CD4-positive, alpha-beta memory T cell (primary cell): ENCODE measurements at regions of chr17 and their contacts with region 1.

Region 1: DNA sequence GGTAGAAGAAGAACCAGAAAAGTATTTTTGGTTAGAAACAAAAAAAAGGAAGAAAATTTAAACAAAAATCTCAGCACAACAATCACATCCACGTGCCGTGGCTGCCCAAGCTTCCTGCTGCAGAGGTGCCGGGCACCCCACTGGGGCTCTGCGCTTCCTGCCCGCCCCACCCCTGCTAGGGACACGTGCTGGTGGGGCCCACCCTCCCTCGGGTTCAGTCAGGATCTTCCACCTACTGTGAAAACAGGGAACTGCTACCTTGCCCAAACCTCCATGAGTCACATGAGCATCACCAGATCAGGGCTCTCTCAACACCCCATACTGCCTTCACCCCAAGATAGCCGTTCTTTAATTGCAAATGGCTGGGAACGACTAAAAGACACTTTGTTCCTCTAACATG is 24.4 kb upstream of the CYTH1 start:
- DNase-seq: peak in 4 of 5 donors; percentile 21 to 79 (median 64)
- H3K4me3 ChIP-seq: no peak overlapping the region
- H3K4me3 Mint-ChIP-seq: peak overlapping the region; percentile 3 to 83 (median 74)
- H3K27ac ChIP-seq: peak overlapping the region; percentile 57
- H3K27ac Mint-ChIP-seq: peak overlapping the region; percentile 87 to 99 (median 97)
- H3K4me1 ChIP-seq: peaks cover 49% of the 10 kb centered on the region
- H3K4me1 Mint-ChIP-seq: peaks cover 39 to 60% (median 52%) of the 10 kb centered on the region in 4 donors
- H3K27me3 ChIP-seq: no peaks in the 10 kb centered on the region
- H3K27me3 Mint-ChIP-seq: no peaks in the 10 kb centered on the region

Region 2: GRCh38 chr17:78774956-78775571 is 31.4 kb before region 1 on chr17:
- CTCF ChIA-PET with region 1: interaction called, 4 read pairs
- POLR2A ChIA-PET with region 1: interaction called, 28 read pairs
- intact Hi-C with region 1: no loop called
- DNase-seq: peak; percentile 57 to 85 (median 63)
- H3K4me3 ChIP-seq: peak overlapping the region; percentile 64 to 70
- H3K4me3 Mint-ChIP-seq: peak overlapping the region; percentile 88 to 97 (median 94)
- H3K27ac ChIP-seq: peak overlapping the region; percentile 81
- H3K27ac Mint-ChIP-seq: peak overlapping the region; percentile 92 to 99 (median 97)
- H3K4me1 ChIP-seq: peaks cover 94% of the 10 kb centered on the region
- H3K4me1 Mint-ChIP-seq: peaks cover 45 to 82% (median 57%) of the 10 kb centered on the region in 4 donors
- H3K27me3 ChIP-seq: no peaks in the 10 kb centered on the region
- H3K27me3 Mint-ChIP-seq: no peaks in the 10 kb centered on the region

Region 3: DNA sequence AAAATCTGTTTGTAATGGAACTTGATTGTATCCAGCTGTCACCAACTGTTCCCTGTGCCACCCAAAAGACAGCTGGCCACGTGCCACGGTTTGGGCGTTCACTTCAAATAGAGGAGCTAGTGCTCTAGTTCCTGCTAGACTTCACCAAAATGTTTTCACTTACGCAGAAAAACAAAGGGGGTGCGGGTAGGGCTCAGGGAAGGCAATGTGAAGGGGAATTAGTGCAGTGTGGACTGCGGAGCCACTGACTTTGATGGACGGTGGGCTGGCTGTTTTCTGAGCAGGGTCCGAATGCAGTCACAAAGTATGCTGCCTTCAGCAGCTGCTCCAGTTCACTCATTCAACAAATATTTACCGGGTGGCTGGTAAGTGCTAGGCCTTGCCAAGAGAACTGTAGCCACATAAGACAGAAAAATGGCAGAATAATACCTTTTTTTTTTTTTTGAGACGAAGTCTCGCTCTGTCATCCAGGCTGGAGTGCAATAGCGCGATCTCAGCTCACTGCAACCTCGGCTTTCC is 16.7 kb before region 1 on chr17:
- CTCF ChIA-PET with region 1: interaction called, 37 read pairs
- POLR2A ChIA-PET with region 1: interaction called, 53 read pairs
- intact Hi-C with region 1: no loop called
- DNase-seq: peak; percentile 76 to 85 (median 78)
- H3K4me3 ChIP-seq: no peak overlapping the region
- H3K4me3 Mint-ChIP-seq: peak overlapping the region in 7 of 8 donors; percentile 37 to 84 (median 70)
- H3K27ac ChIP-seq: peak overlapping the region; percentile 48
- H3K27ac Mint-ChIP-seq: peak overlapping the region; percentile 81 to 97 (median 95)
- H3K4me1 ChIP-seq: peaks cover 74% of the 10 kb centered on the region
- H3K4me1 Mint-ChIP-seq: peaks cover 39 to 89% (median 63%) of the 10 kb centered on the region in 4 donors
- H3K27me3 ChIP-seq: no peaks in the 10 kb centered on the region
- H3K27me3 Mint-ChIP-seq: no peaks in the 10 kb centered on the region

Region 4: DNA sequence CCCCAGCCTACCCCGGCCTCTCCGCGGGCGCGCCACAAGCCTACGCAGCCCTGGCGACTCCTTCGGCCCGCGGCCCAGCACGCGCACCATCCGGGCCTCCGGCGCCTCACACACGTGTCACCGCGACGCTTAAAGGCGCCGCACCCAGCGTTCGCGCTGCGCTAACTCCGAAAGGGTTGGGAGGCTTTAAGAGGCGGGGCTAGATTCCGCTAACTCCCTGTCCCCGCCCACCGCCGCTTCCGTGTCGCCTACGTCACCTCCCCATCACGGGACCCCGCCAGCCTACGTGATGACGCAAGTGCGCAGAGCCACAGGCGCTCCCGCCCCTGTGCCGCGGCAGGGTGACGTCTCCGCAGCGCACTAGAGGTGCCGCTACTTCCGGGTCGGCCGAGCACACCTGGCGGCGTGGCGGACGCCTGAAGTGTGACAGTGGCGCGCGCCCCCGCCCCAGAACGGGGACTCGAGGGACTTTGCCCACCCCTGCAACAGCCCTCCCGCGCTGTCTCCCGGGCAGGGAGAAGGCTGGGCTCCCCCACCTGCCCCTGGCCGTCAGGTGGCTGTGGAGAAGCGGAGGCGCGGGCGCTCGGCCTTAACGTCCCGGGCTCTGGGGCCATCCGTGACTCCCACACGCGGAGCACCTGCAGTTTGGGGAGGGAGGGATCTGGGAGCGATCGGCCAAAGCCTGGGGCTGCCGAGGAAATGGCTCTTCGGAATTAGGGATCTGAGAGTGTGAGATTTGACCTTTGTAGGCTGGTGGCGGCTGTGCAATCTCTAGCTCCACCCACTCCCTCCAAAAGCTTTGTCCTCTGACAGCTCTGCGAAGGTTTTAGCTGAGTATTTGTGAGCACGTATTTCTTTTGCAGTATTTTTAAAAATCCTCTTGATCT is 34.5 kb after region 1 on chr17 and contains the start of gene USP36:
- CTCF ChIA-PET with region 1: interaction called, 8 read pairs
- POLR2A ChIA-PET with region 1: interaction called, 8 read pairs
- intact Hi-C with region 1: loop called (anchors 5 kb)
- DNase-seq: peak; percentile 99 to 100 (median 99)
- H3K4me3 ChIP-seq: peak within 1 kb of the TSS; percentile 74 to 89
- H3K4me3 Mint-ChIP-seq: peak within 1 kb of the TSS; percentile 93 to 99 (median 96)
- H3K27ac ChIP-seq: peak within 1 kb of the TSS; percentile 95
- H3K27ac Mint-ChIP-seq: peak within 1 kb of the TSS; percentile 93 to 99 (median 99)
- H3K4me1 ChIP-seq: peaks cover 40% of the 10 kb centered on the region
- H3K4me1 Mint-ChIP-seq: peaks cover 37 to 73% (median 49%) of the 10 kb centered on the region in 4 donors
- H3K27me3 ChIP-seq: no peaks in the 10 kb centered on the region
- H3K27me3 Mint-ChIP-seq: no peaks in the 10 kb centered on the region
- total RNA-seq, gene USP36: 181 to 183 TPM

Region 5: GRCh38 chr17:78883164-78884122 is 77.0 kb after region 1 on chr17:
- CTCF ChIA-PET with region 1: no interaction called
- POLR2A ChIA-PET with region 1: no interaction called
- intact Hi-C with region 1: no loop called
- DNase-seq: no peak
- H3K4me3 ChIP-seq: no peak overlapping the region
- H3K4me3 Mint-ChIP-seq: no peak overlapping the region
- H3K27ac ChIP-seq: no peak overlapping the region
- H3K27ac Mint-ChIP-seq: no peak overlapping the region
- H3K4me1 ChIP-seq: peaks cover 12% of the 10 kb centered on the region
- H3K4me1 Mint-ChIP-seq: peaks cover 8 to 21% (median 13%) of the 10 kb centered on the region in 4 donors
- H3K27me3 ChIP-seq: peaks cover 4% of the 10 kb centered on the region
- H3K27me3 Mint-ChIP-seq: peaks cover 6% of the 10 kb centered on the region in 2 donors